ENCODE measurements at regions of chr11 and their contacts with region 1.

Region 1: GRCh38 chr11:62081378-62082291 is 42.2 kb upstream of the INCENP start:
- DNase-seq: peak; percentile 85 to 87 (median 86)
- ATAC-seq: peak; percentile 96
- H3K4me3 ChIP-seq: no peak overlapping the region
- H3K27ac ChIP-seq: no peak overlapping the region
- H3K4me1 ChIP-seq: peaks cover 5% of the 10 kb centered on the region
- H3K27me3 ChIP-seq: no peaks in the 10 kb centered on the region
- CTCF ChIP-seq: peak; percentile 81 to 96 (median 91)
- POLR2A ChIP-seq: no peak

Region 2: DNA sequence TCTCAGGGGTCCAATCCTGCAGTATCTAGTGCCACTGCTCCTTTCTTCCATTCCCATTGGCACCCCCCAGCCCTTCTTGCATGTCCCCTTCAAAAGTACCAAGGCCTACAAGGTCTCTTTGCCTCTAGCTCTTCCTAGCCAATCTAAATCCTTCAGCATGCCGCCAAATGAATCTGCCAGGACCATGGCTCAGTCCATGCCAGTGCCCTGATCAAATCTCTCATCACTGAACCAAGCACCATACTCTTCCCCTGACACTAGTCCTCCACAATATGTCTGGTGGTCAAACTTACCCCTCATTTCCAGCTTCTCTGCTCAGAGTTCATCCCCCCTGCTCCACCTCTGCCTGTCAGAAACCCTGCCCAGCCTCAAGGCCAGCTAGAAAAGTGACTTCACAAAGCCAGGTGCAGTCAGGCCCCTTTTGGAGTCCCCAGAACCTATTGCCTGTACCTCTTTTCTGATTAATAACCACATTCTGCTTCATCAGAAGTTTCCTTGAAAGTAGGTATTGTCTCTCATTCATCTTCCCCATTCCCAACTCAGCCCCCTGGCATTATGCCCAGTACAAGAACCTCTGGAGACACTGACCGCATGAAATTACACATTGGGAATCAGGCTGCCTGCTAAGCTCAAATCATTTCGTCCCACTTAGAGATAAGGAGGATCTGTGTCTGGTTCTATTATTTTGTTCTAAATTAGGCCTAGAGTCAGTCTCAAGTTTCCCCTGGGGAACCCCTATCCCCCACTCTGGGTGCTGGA is 277.6 kb before region 1 on chr11:
- intact Hi-C with region 1: loop called (anchors 10 kb)
- DNase-seq: no peak
- ATAC-seq: no peak
- H3K4me3 ChIP-seq: no peak overlapping the region
- H3K27ac ChIP-seq: no peak overlapping the region
- H3K4me1 ChIP-seq: no peaks in the 10 kb centered on the region
- H3K27me3 ChIP-seq: no peaks in the 10 kb centered on the region
- CTCF ChIP-seq: no peak
- POLR2A ChIP-seq: no peak

Region 3: DNA sequence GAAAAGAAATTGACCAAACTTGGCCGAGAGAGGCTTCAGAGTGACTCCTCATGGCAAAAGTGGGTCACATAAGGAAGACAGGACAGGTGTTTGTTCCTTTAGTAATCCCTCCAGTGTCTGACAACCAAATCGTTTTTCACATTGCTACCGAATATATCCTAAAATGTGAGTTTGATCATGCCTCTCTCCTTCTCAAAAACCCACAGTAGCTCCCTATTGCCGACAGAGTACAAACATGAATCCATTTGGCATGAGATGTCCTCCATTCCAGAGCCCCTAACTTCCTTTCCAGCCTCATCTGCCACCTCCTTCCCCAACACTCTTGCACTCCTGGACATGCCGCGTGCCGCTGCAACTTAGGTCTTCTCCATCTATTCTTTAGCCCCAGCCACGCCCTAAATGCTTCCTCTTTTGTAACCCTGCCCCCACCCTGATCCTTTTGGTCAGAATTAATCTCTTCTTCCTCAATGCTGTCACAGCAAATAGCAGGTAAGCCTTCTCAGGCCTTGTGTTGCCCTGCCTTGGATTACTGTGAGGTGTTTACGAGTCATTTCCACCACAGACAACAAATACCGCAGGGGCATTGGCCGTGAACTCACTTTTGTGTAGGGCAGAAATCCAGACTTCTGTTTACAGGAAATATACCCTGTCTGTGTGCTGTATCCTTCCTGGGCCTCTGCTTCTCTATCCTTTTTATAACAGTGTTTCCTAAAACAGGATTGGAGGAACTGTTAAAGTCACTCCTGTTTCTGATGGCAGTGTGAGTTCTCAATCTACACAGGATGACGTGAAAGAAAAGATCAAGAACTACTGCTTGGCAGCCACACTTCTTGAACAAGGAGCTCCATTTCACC is 48.2 kb before region 1 on chr11:
- intact Hi-C with region 1: no loop called
- DNase-seq: peak in 1 of 4 donors; percentile 43
- ATAC-seq: no peak
- H3K4me3 ChIP-seq: no peak overlapping the region
- H3K27ac ChIP-seq: no peak overlapping the region
- H3K4me1 ChIP-seq: no peaks in the 10 kb centered on the region
- H3K27me3 ChIP-seq: no peaks in the 10 kb centered on the region
- CTCF ChIP-seq: no peak
- POLR2A ChIP-seq: no peak

Region 4: GRCh38 chr11:62273789-62274275 is 192.2 kb after region 1 on chr11:
- intact Hi-C with region 1: no loop called
- DNase-seq: no peak
- ATAC-seq: no peak
- H3K4me3 ChIP-seq: no peak overlapping the region
- H3K27ac ChIP-seq: no peak overlapping the region
- H3K4me1 ChIP-seq: no peaks in the 10 kb centered on the region
- H3K27me3 ChIP-seq: no peaks in the 10 kb centered on the region
- CTCF ChIP-seq: no peak
- POLR2A ChIP-seq: no peak